Mammary epithelial cell (primary cell): ENCODE measurements at regions of chr19 and their contacts with region 1.

Region 1: DNA sequence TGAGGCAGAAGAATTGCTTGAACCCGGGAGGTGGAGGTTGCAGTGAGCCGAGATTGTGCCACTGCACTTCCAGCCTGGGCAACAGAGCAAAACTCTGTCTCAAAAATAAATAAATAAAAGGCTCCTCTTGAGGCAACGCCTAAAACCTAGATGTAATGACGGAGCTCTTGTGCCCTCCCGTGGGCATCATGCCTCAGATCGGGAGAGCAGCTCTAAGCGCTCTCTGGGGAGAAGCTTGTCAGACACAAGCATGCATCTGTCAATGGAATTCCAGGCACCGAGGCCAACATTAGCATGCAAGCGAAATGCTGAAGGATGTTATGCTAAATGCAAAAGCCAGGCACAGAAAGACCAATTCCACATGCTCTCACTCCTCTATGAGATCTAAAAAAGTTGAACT is 45.6 kb upstream of the MRI1 start:
- DNase-seq: peak; percentile 61
- H3K4me3 ChIP-seq: no peak overlapping the region
- H3K27ac ChIP-seq: no peak overlapping the region
- H3K4me1 ChIP-seq: no peaks in the 10 kb centered on the region
- H3K27me3 ChIP-seq: no peaks in the 10 kb centered on the region
- CTCF ChIP-seq: peak; percentile 45 to 71

Region 2: DNA sequence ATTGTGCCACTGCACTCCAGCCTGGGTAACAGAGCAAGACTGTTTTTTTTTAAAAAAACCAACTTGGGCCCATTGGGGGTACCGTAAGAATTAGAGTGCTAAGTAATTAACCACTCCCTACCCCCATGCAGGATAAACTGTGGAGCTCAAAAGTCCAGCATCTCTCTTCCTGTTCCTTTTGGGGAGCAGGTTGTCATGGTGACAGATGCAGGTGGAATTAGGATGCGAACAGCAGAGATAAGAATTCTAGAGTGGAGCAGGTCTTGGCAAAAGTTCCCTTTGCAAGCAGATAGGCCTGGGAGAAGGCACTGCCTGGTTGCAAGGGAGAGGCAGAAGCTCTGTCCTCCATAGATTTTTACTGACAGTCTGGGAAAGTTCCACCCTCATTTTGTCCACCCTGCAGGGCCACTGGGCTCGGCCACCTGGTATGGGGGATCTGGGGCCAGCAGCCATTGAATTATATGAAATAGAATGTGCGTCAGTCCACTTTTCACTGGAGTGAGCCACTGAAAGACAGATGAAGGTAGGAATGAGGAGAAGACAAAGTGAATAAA is 426.9 kb before region 1 on chr19:
- CTCF ChIA-PET with region 1: no interaction called
- dilution Hi-C with region 1: loop called (anchors 5 kb)
- in situ Hi-C with region 1: no loop called
- intact Hi-C with region 1: no loop called
- DNase-seq: no peak
- H3K4me3 ChIP-seq: no peak overlapping the region
- H3K27ac ChIP-seq: no peak overlapping the region
- H3K4me1 ChIP-seq: no peaks in the 10 kb centered on the region
- H3K27me3 ChIP-seq: no peaks in the 10 kb centered on the region
- CTCF ChIP-seq: no peak

Region 3: DNA sequence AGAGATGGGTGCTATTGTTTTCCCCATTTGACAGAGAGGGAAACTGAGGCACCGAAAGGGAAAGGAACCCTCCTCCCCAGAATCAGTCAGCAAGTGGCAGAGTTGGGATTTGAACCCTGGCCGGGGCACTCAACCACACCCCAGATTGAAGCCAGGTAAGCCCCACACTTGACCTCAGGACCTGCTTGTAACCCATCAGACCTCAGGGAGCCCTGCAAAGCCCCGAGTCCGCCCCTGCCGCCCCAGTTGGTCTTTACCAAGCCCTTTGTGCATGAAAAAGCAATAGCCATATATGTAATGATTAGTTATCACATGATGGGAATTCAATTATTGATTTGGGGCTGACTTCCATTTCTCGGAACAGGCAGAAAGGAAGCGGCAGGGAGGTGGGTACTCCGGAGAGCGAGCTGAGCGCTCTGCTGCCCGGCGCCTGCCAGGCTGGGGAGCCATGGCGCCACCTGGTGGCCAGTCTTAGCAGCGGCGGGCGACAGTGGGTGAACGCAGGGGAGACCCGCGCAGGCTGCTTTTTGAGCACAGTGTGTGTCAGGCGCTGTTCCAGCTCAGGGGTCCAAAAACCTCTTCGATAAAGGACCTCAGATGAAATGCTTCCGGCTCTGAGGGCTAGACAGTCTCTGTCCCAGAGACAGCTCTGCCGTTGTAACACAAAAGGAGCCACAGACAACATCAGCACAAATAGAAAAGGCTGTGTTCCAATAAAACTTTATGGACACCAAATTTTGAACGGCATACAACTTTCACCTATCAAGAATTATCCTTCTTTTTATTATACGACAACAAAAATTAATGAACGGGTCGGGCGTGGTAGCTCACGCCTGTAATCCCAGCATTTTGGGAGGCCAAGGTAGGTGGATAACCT is 129.5 kb before region 1 on chr19:
- CTCF ChIA-PET with region 1: interaction called, 3 read pairs
- dilution Hi-C with region 1: loop called (anchors 10 kb)
- in situ Hi-C with region 1: loop called in 1 of 2 experiments (anchors 5 kb)
- intact Hi-C with region 1: no loop called
- DNase-seq: peak; percentile 40
- H3K4me3 ChIP-seq: no peak overlapping the region
- H3K27ac ChIP-seq: no peak overlapping the region
- H3K4me1 ChIP-seq: no peaks in the 10 kb centered on the region
- H3K27me3 ChIP-seq: no peaks in the 10 kb centered on the region
- CTCF ChIP-seq: peak; percentile 74 to 97

Region 4: GRCh38 chr19:13604902-13605586 is 113.7 kb before region 1 on chr19:
- CTCF ChIA-PET with region 1: no interaction called
- dilution Hi-C with region 1: no loop called
- in situ Hi-C with region 1: loop called in 1 of 2 experiments (anchors 5 kb)
- intact Hi-C with region 1: no loop called
- DNase-seq: no peak
- H3K4me3 ChIP-seq: no peak overlapping the region
- H3K27ac ChIP-seq: no peak overlapping the region
- H3K4me1 ChIP-seq: no peaks in the 10 kb centered on the region
- H3K27me3 ChIP-seq: no peaks in the 10 kb centered on the region
- CTCF ChIP-seq: no peak

Region 5: GRCh38 chr19:13637664-13638063 is 81.1 kb before region 1 on chr19:
- CTCF ChIA-PET with region 1: no interaction called
- dilution Hi-C with region 1: loop called (anchors 5 kb)
- in situ Hi-C with region 1: no loop called
- intact Hi-C with region 1: no loop called
- DNase-seq: peak; percentile 61
- H3K4me3 ChIP-seq: no peak overlapping the region
- H3K27ac ChIP-seq: no peak overlapping the region
- H3K4me1 ChIP-seq: no peaks in the 10 kb centered on the region
- H3K27me3 ChIP-seq: no peaks in the 10 kb centered on the region
- CTCF ChIP-seq: no peak

Region 6: DNA sequence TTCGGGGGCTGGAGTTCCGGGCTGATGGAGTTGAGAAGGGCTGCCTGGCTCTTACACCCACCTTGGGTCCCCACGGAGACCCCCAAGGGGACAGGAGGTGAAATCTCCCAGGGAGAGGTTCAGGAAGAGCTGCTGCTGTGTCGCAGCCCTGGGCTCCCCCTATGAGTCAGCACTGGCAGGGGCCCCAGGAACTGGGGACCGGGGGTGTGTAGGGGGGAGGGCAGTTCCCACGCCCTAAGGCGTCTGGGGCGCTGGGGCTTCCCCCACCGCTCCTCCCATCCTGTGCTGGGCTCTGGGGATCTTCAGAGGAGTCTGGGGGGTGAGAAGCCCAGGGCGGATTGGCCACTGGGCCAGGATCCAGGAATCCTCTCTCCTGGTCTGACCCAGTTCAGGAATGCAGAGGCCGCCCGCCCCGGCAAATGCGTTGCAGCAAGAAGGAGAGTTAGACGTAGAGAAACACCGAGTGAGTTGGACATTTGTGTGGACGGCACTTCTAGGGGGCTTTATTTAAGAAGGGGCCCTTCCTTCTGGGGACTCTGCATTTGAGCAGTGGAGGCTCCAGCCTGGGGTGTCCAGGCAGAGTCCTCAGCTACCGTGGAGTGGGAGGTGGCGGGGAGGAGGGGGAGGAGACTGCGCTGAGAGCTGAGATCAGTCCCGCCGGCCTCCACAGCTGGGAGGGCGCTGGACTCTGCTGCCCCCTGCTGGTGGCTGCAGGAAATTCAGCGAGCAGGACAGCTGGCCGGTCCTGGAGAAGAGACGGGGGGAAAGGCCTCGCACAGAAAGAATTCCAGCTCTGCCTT is 143.2 kb after region 1 on chr19:
- CTCF ChIA-PET with region 1: interaction called, 6 read pairs
- dilution Hi-C with region 1: no loop called
- in situ Hi-C with region 1: no loop called
- intact Hi-C with region 1: loop called (anchors 1 kb)
- DNase-seq: peak; percentile 90
- H3K4me3 ChIP-seq: peak overlapping the region; percentile 39 to 42 (median 40)
- H3K27ac ChIP-seq: peak overlapping the region; percentile 81
- H3K4me1 ChIP-seq: peaks cover 23% of the 10 kb centered on the region
- H3K27me3 ChIP-seq: peaks cover 2% of the 10 kb centered on the region
- CTCF ChIP-seq: peak; percentile 79 to 94

Region 7: DNA sequence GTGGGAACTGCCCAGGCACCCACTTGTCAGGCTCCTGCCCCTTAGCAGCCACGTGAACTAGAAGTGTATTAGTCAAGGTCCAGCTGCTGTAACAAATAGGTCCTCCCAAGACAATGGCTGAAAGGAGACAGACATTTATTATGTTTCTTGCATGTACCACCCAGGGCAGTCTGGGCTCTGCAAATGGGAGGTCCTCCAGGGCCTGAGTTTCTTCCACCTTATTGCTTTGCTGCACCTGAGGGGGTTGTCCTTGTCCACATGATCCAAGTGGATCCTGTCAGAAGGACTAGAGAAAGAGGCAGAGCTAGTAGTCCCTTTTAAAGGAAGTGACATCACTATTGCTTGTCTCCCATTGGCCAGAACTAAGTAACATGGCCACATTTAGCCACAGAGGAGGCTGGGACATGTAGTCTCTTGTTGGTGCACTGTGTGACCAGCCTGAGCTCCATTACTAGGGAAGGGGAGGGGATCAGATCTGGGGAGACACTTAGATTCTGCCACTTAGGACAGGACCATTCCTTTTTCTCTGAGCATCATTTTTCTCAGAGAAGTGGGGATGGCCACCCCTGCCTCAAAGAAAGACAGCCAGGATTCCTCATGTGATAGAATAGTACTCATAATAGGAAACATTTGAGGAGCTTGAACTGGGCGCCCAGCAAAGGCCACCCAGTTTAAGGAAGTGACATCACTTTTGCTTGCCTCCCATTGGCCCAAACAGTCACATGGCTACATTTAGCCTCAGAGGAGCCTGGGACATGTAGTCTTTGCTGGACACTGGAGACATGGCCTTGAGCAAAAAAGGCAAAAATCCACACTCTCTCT is 202.4 kb after region 1 on chr19:
- CTCF ChIA-PET with region 1: no interaction called
- dilution Hi-C with region 1: no loop called
- in situ Hi-C with region 1: no loop called
- intact Hi-C with region 1: no loop called
- DNase-seq: peak; percentile 51
- H3K4me3 ChIP-seq: no peak overlapping the region
- H3K27ac ChIP-seq: no peak overlapping the region
- H3K4me1 ChIP-seq: no peaks in the 10 kb centered on the region
- H3K27me3 ChIP-seq: no peaks in the 10 kb centered on the region
- CTCF ChIP-seq: no peak